ENCODE measurements at regions of chr16 and their contacts with region 1.

Region 1: DNA sequence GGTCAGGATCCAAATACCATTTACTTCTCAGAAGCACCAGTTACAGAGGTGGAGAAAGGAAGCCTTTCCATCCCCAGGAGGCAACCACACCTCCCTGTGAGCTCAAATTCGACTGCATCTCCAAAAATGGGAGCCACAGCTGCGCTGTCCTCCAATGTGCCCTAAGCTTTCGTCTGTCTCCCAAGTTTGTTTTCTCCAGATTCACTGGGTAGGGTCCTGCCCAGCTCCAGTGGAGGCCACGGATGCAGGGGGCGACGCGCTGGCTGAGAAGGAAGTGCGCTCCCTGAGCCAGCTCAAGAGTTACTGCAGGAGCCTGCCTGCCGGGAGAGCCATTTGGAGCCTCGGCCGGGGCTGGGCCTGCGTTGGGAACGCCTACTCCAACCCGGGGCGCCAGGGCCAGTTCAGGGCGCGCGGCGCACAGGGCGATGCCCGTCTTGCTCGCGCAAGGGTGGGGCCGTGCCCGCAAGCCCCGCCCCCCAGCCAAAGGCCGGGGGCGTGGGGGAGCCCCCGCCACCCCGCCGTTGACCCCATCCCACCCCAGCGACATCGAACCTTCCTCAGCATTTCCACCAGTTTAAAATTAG is 19.5 kb downstream of the SIAH1 start:
- DNase-seq: peak; percentile 94
- ATAC-seq: peak; percentile 98
- H3K4me3 Mint-ChIP-seq: peak overlapping the region; percentile 79
- H3K27ac Mint-ChIP-seq: peak overlapping the region; percentile 94
- H3K4me1 Mint-ChIP-seq: peaks cover 53% of the 10 kb centered on the region
- H3K27me3 Mint-ChIP-seq: no peaks in the 10 kb centered on the region
- CTCF ChIP-seq: no peak

Region 2: GRCh38 chr16:48295499-48296281 is 70.0 kb before region 1 on chr16:
- CTCF ChIA-PET with region 1: no interaction called
- POLR2A ChIA-PET with region 1: no interaction called
- DNase-seq: no peak
- ATAC-seq: no peak
- H3K4me3 Mint-ChIP-seq: no peak overlapping the region
- H3K27ac Mint-ChIP-seq: no peak overlapping the region
- H3K4me1 Mint-ChIP-seq: peaks cover 12% of the 10 kb centered on the region
- H3K27me3 Mint-ChIP-seq: no peaks in the 10 kb centered on the region
- CTCF ChIP-seq: no peak

Region 3: GRCh38 chr16:48330841-48331192 is 34.9 kb before region 1 on chr16:
- CTCF ChIA-PET with region 1: no interaction called
- POLR2A ChIA-PET with region 1: interaction called, 17 read pairs
- DNase-seq: no peak
- ATAC-seq: no peak
- H3K4me3 Mint-ChIP-seq: no peak overlapping the region
- H3K27ac Mint-ChIP-seq: no peak overlapping the region
- H3K4me1 Mint-ChIP-seq: peaks cover 28% of the 10 kb centered on the region
- H3K27me3 Mint-ChIP-seq: no peaks in the 10 kb centered on the region
- CTCF ChIP-seq: no peak

Region 4: DNA sequence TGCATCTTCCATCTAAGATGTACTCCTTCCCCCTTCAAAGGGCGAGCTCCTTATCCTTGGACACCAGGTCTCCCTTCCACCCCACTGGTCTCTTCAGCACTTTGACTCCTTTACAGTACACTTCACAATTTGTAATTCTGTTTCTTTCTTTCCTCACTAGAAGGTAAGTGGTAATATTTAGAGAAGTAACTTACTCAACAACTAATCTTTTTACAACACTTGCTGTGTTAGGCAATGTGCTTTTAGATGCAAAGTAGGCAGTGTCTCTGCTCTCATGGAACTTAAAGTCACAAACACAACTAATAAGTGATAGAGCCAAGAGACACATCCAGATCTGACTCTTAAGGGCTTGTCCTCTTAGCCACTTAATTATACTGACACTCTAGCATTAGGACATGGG is 13.2 kb after region 1 on chr16:
- CTCF ChIA-PET with region 1: interaction called, 3 read pairs
- POLR2A ChIA-PET with region 1: interaction called, 28 read pairs
- DNase-seq: no peak
- ATAC-seq: no peak
- H3K4me3 Mint-ChIP-seq: no peak overlapping the region
- H3K27ac Mint-ChIP-seq: peak overlapping the region; percentile 36
- H3K4me1 Mint-ChIP-seq: peaks cover 54% of the 10 kb centered on the region
- H3K27me3 Mint-ChIP-seq: no peaks in the 10 kb centered on the region
- CTCF ChIP-seq: no peak

Region 5: GRCh38 chr16:48385272-48386150 is 19.8 kb after region 1 on chr16 and contains the start of gene SIAH1:
- CTCF ChIA-PET with region 1: interaction called, 3 read pairs
- POLR2A ChIA-PET with region 1: interaction called, 28 read pairs
- DNase-seq: peak; percentile 87
- ATAC-seq: peak; percentile 81
- H3K4me3 Mint-ChIP-seq: peak within 1 kb of the TSS; percentile 98
- H3K27ac Mint-ChIP-seq: peak within 1 kb of the TSS; percentile 98
- H3K4me1 Mint-ChIP-seq: peaks cover 38% of the 10 kb centered on the region
- H3K27me3 Mint-ChIP-seq: no peaks in the 10 kb centered on the region
- CTCF ChIP-seq: no peak
- total RNA-seq, gene SIAH1: 27.0 to 29.9 TPM (median 28.0 TPM) in 3 replicates